ENCODE measurements at regions of chr4 and their contacts with region 1.

Region 1: DNA sequence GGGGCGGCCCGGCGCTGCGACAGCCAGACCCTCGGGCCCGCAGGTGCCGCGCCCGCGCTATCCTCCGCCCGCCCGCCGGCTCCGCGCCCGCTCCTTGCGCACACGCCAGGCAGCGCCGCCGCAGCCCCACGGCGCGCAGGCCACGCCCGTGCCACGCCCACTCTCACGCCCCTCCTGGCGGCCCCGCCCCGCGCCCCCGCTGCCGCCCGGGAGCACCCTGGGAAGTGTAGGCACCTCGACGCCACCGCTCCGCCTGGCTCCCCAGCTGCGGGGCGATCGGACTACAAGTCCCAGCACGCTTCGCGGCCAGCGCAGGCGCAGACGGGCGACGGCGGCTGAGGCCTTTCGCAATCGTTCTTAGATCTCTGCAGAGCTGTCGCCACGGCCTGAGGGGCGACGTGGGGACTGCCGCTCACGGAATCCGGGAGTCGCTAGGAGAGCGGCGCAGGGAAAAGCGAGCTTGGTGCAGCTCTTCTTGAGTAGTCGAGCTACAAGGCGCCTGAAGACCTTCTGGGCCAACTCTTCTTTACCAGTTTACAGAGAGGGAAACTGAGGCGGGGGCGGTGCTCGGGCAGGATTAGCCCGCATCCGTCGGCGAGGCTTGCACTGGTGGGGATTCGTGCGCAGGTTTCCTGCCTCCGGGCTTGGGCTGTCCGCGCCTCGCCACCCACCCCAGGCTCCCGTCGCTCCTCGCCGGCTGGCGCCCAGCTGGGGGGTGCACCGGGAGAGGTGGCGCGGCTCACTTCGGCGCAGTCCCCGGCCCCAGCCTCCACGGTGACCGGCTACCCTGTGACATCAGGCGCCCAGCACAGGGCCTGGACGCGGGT is at the start of gene ABLIM2:
- DNase-seq: peak; percentile 98
- H3K4me3 ChIP-seq: peak within 1 kb of the TSS; percentile 75 to 80 (median 78)
- H3K27ac ChIP-seq: peak within 1 kb of the TSS; percentile 61 to 71 (median 62)
- H3K4me1 ChIP-seq: peaks cover 25 to 38% (median 29%) of the 10 kb centered on the region in 4 donors
- H3K27me3 ChIP-seq: peaks cover 0 to 9% (median 4%) of the 10 kb centered on the region in 4 donors
- CTCF ChIP-seq: peak in 1 of 3 experiments; percentile 23
- EP300 ChIP-seq: no peak
- POLR2A ChIP-seq: peak; percentile 74
- total RNA-seq, gene ABLIM2: 4.2 to 28.5 (median 8.7) TPM

Region 2: DNA sequence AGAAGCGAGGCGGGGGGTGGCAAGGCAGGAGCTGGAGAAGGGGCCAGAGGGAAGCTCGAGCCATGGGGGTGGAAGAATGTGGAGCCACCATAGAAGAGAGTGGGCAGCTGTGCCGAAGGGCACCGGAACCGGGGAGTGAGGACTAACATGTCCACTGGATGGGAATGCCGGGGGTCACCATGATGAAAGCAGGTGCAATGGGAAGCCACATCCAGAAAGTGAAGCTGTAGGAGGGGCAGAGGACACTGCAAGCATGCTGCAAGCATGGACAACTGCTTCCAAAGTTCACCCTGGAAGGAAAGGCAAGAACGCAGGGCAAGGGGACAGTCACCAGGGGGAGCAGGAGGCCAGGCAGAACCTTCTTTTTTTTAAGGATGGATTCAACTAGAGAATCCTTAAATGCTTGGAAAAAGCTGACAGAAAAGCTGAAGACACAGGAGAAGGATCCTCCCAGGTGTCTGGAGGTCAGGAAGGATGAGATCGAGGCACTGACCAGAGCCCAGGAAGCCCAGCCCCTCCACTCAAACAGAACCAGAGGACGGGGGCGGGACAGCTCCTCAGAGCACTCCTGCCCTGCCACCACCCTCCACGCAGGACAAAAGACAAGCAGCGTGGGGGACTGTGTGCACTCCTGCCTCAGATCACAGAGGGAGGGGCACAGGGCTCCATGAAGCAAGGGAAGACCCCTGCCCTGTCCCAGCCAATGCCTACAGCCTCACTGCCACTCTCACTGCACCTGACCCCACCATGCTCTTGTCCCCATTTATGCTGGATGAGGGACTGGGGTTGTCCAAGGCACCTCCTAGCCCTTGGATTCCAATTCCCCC is 388.5 kb before region 1 on chr4:
- intact Hi-C with region 1: no loop called
- DNase-seq: no peak
- H3K4me3 ChIP-seq: no peak overlapping the region
- H3K27ac ChIP-seq: peak overlapping the region in 3 of 4 donors; percentile 35 to 55 (median 40)
- H3K4me1 ChIP-seq: peaks cover 16 to 75% (median 60%) of the 10 kb centered on the region in 4 donors
- H3K27me3 ChIP-seq: no peaks in the 10 kb centered on the region
- CTCF ChIP-seq: peak; percentile 34 to 47 (median 42)
- EP300 ChIP-seq: no peak
- POLR2A ChIP-seq: no peak

Region 3: GRCh38 chr4:8050555-8051206 is 108.2 kb before region 1 on chr4:
- intact Hi-C with region 1: loop called (anchors 5 kb)
- DNase-seq: no peak
- H3K4me3 ChIP-seq: peak overlapping the region in 3 of 4 donors; percentile 12 to 34 (median 31)
- H3K27ac ChIP-seq: peak overlapping the region; percentile 42 to 79 (median 74)
- H3K4me1 ChIP-seq: peaks cover 17 to 20% (median 18%) of the 10 kb centered on the region in 4 donors
- H3K27me3 ChIP-seq: no peaks in the 10 kb centered on the region
- CTCF ChIP-seq: no peak
- EP300 ChIP-seq: no peak
- POLR2A ChIP-seq: no peak